IMR-90 (cell line): ENCODE measurements at regions of chr20 and their contacts with region 1.

Region 1: DNA sequence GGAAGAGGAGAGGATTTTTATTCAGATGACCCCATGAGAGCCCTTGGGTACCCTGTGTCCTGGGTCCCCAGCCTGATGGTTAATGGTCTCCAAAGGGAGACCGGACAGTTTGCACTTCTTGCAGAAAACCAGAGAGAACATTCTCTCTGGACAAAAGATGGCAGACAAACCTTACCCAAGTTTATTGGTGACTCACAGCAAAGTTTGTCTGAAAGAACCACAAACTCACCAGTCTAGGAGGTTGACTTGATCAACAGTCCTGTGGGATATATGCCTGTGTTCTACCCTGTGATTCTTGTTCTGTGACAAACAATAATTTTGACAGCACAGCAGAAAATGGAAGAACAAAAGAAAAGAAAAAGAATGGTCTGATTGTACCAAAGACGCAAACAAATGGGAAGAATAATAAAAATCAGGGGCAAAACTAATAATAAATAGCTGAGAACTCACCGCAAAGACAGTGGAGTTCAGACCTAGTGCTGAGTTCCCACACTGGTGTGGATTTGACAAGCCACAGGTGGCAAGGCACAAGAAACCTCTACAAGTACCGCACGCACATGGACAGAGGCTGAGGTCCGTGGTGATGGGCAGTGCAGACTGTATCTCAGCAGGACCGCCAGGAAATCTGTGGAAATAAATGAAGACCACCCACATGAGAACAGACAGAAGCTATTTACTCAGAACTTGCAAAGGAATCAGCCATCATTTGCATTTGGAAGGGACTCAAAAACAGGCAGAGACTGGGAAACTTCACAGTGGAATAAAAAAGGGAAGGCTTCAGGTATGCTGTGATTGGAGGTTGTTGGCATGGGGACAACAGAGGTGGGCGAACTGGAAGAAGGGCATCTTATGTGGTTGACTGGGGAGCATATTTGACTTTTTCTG is 246.2 kb upstream of the RNF24 start:
- DNase-seq: peak; percentile 56
- ATAC-seq: peak; percentile 56; the same call in 1 of the 2 replicates
- H3K4me3 ChIP-seq: no peak overlapping the region
- H3K27ac ChIP-seq: no peak overlapping the region
- H3K4me1 ChIP-seq: no peaks in the 10 kb centered on the region
- H3K27me3 ChIP-seq: peaks cover 11% of the 10 kb centered on the region; the same call in 1 of the 2 replicates
- CTCF ChIP-seq: peak; percentile 34; the same call in 1 of the 2 replicates
- POLR2A ChIP-seq: no peak
- RAD21 ChIP-seq: peak; percentile 31

Region 2: DNA sequence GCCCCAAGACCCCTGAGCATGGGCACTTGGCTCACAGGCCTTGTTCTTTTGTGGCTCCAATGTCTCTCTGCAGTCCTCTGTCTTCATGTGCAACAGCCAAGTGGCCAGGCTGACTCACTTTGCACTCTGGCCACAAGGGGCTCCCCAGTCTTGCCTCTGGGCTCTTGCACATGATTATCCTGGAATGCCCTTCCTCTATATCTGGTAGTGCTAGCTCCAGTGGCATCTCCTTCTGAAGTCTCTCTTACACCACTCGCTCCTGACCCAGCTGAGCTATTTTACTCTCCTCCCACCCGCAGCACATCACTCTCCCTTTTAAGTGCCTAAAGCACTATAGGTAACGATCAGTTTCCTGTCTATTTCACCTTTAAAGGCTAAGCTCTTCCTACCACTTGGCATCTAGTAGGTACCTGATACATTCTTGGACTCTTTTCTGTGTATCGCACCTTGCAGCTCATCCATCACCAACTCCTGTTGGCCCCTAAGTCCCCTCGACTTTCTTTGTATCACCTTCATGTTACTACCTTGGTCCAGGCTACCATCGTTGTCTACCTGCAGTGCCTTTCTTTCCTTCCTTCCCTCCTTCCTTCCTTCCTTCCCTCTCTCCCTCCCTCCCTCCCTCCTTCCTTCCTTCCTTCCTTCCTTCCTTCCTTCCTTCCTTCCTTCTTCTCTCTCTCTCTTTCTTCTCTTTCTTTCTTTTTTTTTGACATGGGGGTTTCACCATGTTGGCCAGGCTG is 34.3 kb before region 1 on chr20:
- CTCF ChIA-PET with region 1: no interaction called
- POLR2A ChIA-PET with region 1: no interaction called
- dilution Hi-C with region 1: no loop called
- in situ Hi-C with region 1: no loop called
- intact Hi-C with region 1: no loop called
- DNase-seq: peak; percentile 73
- ATAC-seq: peak; percentile 30
- H3K4me3 ChIP-seq: no peak overlapping the region
- H3K27ac ChIP-seq: no peak overlapping the region
- H3K4me1 ChIP-seq: peaks cover 14% of the 10 kb centered on the region
- H3K27me3 ChIP-seq: no peaks in the 10 kb centered on the region
- CTCF ChIP-seq: peak; percentile 62
- POLR2A ChIP-seq: no peak
- RAD21 ChIP-seq: peak; percentile 61

Region 3: GRCh38 chr20:4369798-4370124 is 108.2 kb after region 1 on chr20:
- CTCF ChIA-PET with region 1: no interaction called
- POLR2A ChIA-PET with region 1: no interaction called
- dilution Hi-C with region 1: no loop called
- in situ Hi-C with region 1: no loop called
- intact Hi-C with region 1: no loop called
- DNase-seq: no peak
- ATAC-seq: no peak
- H3K4me3 ChIP-seq: no peak overlapping the region
- H3K27ac ChIP-seq: no peak overlapping the region
- H3K4me1 ChIP-seq: no peaks in the 10 kb centered on the region
- H3K27me3 ChIP-seq: no peaks in the 10 kb centered on the region
- CTCF ChIP-seq: no peak
- POLR2A ChIP-seq: no peak
- RAD21 ChIP-seq: no peak

Region 4: DNA sequence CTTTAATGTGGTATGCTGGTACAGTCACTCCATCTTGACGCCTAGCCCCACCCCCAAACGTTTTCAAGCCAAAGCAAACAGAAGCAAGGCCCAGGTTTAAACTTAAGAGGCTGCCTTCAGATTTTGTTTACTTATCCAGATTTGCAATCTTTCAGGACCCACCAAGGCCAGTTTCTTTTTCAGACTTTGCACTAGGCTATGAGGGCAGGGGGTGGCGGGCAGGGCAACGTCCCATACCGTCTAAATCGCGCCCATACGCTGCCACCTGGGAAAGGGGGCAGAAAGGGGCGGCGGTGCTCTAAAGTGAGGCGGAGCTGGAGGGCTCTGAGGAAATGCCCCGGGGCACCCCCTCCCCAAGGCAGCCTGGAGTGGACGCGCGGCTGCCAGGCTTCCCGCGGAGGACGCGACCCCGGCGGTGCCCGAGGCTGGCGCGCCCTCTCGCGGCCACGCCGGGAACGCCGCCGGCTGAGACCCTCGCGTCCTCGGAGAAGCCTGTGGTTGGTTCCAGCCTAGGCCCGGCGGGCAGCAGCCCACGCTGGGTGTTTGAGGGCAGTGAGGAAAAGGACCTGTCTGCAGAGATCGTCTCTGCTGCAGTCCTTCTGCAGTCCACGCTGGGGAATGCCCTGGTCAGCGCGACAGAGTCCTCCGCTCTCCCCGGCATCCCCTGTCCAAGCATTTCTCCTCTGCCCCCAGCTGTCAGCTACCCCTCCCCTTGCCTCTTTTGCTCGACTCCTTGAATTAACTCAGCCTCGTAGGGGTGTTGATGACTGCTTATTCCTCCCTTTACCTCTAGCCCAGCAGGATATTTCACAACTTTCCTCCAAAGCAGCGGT is 331.0 kb after region 1 on chr20:
- CTCF ChIA-PET with region 1: no interaction called
- POLR2A ChIA-PET with region 1: interaction called, 3 read pairs
- dilution Hi-C with region 1: loop called (anchors 25 kb)
- in situ Hi-C with region 1: no loop called
- intact Hi-C with region 1: no loop called
- DNase-seq: no peak
- ATAC-seq: peak; percentile 96
- H3K4me3 ChIP-seq: peak overlapping the region; percentile 44
- H3K27ac ChIP-seq: peak overlapping the region; percentile 35; the same call in 1 of the 2 replicates
- H3K4me1 ChIP-seq: peaks cover 3% of the 10 kb centered on the region; the same call in 1 of the 2 replicates
- H3K27me3 ChIP-seq: no peaks in the 10 kb centered on the region
- CTCF ChIP-seq: peak; percentile 91
- POLR2A ChIP-seq: peak; percentile 29; the same call in 1 of the 2 replicates
- RAD21 ChIP-seq: peak; percentile 99